ENCODE measurements at regions of chr9 and their contacts with region 1.

Region 1: GRCh38 chr9:68584189-68585033 is 43.7 kb upstream of the TMEM252 start:
- DNase-seq: peak; percentile 80
- ATAC-seq: peak; percentile 99
- H3K4me3 ChIP-seq: no peak overlapping the region
- H3K27ac ChIP-seq: no peak overlapping the region
- H3K4me1 ChIP-seq: no peaks in the 10 kb centered on the region
- H3K27me3 ChIP-seq: peaks cover 3% of the 10 kb centered on the region; the same call in 1 of the 2 replicates
- CTCF ChIP-seq: peak; percentile 99
- POLR2A ChIP-seq: no peak
- RAD21 ChIP-seq: peak; percentile 92

Region 2: DNA sequence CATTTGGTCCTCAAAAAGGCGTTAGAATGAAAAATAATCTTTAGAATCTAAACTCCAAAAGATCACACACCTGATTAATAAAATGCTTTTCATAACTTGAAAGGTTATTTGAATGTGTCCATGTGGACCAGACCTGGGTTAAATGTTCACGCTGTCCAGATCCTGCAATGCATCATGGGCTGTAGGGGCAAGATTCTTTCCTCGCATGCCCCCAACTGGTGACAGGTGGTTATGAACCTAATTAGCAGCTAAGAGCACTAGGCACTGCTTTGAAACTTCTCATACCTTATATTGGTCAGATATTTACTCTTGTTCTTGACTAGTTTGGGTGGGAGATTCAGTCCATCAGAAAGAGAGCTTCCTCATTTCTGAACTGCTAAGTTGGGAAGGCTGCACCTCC is 101.4 kb after region 1 on chr9:
- CTCF ChIA-PET with region 1: no interaction called
- POLR2A ChIA-PET with region 1: no interaction called
- RAD21 ChIA-PET with region 1: no interaction called
- intact Hi-C with region 1: loop called (anchors 5 kb)
- DNase-seq: peak; percentile 37
- ATAC-seq: peak; percentile 99
- H3K4me3 ChIP-seq: no peak overlapping the region
- H3K27ac ChIP-seq: no peak overlapping the region
- H3K4me1 ChIP-seq: peaks cover 5% of the 10 kb centered on the region in 2 experiments; a peak in 2 of 4 replicates
- H3K27me3 ChIP-seq: peaks cover 43% of the 10 kb centered on the region
- CTCF ChIP-seq: peak; percentile 53 to 69 (median 64); a peak in 5 of 6 replicates
- POLR2A ChIP-seq: no peak
- RAD21 ChIP-seq: peak; percentile 42

Region 3: GRCh38 chr9:68844631-68845612 is 260.5 kb after region 1 on chr9:
- CTCF ChIA-PET with region 1: interaction called, 6 read pairs
- POLR2A ChIA-PET with region 1: no interaction called
- RAD21 ChIA-PET with region 1: interaction called in 1 of 2 experiments, 3 read pairs
- intact Hi-C with region 1: loop called (anchors 1 kb)
- DNase-seq: peak; percentile 16
- ATAC-seq: peak; percentile 81
- H3K4me3 ChIP-seq: no peak overlapping the region
- H3K27ac ChIP-seq: no peak overlapping the region
- H3K4me1 ChIP-seq: no peaks in the 10 kb centered on the region
- H3K27me3 ChIP-seq: peaks cover 3% of the 10 kb centered on the region
- CTCF ChIP-seq: peak; percentile 34 to 74 (median 73); a peak in 5 of 6 replicates
- POLR2A ChIP-seq: no peak
- RAD21 ChIP-seq: peak; percentile 42; the same call in 1 of the 2 replicates

Region 4: DNA sequence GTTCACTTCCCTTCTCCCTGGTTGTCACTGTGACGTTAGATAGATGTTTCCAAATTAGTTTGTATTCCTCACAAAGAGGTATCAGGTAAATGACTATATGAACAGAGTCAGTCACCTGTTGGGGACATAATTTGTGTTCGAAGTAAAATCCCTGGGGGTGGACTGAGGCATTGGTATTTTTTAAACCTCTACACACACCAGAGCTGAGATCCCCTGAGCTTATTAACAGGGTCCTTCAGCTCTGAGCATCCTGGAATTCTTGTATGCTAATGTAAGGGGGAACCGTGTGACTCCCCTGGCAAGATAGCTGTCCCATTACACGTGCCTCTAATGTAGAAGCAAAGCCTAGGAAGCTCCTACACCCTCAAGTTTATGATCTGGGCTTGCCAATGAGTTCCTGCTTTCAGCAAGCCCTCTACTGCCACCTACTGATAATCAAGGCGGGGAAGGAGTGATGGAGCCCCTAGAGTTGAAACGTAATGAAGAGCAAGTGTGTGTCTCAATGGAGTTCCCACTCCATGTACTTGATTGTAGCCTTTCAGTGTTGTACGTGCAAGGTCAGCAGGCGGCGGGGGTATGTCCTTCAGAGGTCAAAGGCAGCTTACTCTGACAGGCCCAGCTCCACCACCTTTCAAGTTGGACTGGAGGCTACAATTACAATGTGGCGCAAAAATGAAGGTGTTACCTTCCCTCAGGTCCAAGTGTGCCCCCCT is 415.1 kb after region 1 on chr9:
- CTCF ChIA-PET with region 1: interaction called, 14 read pairs
- POLR2A ChIA-PET with region 1: no interaction called
- RAD21 ChIA-PET with region 1: no interaction called
- intact Hi-C with region 1: loop called (anchors 1 kb)
- DNase-seq: peak; percentile 61
- ATAC-seq: peak; percentile 97
- H3K4me3 ChIP-seq: no peak overlapping the region
- H3K27ac ChIP-seq: no peak overlapping the region
- H3K4me1 ChIP-seq: no peaks in the 10 kb centered on the region
- H3K27me3 ChIP-seq: peaks cover 7% of the 10 kb centered on the region; the same call in 1 of the 2 replicates
- CTCF ChIP-seq: peak; percentile 81 to 94 (median 86)
- POLR2A ChIP-seq: no peak
- RAD21 ChIP-seq: peak; percentile 84

Region 5: GRCh38 chr9:69027355-69028096 is 443.1 kb after region 1 on chr9:
- CTCF ChIA-PET with region 1: no interaction called
- POLR2A ChIA-PET with region 1: no interaction called
- RAD21 ChIA-PET with region 1: no interaction called
- intact Hi-C with region 1: loop called (anchors 1 kb)
- DNase-seq: peak; percentile 65
- ATAC-seq: peak; percentile 93
- H3K4me3 ChIP-seq: no peak overlapping the region
- H3K27ac ChIP-seq: no peak overlapping the region
- H3K4me1 ChIP-seq: peaks cover 0 to 4% of the 10 kb centered on the region in 2 experiments; a peak in 1 of 4 replicates
- H3K27me3 ChIP-seq: no peaks in the 10 kb centered on the region
- CTCF ChIP-seq: peak; percentile 49 to 85 (median 85); a peak in 5 of 6 replicates
- POLR2A ChIP-seq: no peak
- RAD21 ChIP-seq: peak; percentile 55

Region 6: GRCh38 chr9:69180670-69181069 is 596.3 kb after region 1 on chr9:
- CTCF ChIA-PET with region 1: no interaction called
- POLR2A ChIA-PET with region 1: no interaction called
- RAD21 ChIA-PET with region 1: no interaction called
- intact Hi-C with region 1: no loop called
- DNase-seq: peak; percentile 83
- ATAC-seq: peak; percentile 90
- H3K4me3 ChIP-seq: peak overlapping the region in 1 of 2 experiments; percentile 22; a peak in 2 of 4 replicates
- H3K27ac ChIP-seq: peak overlapping the region; percentile 57
- H3K4me1 ChIP-seq: peaks cover 45 to 53% of the 10 kb centered on the region in 2 experiments
- H3K27me3 ChIP-seq: no peaks in the 10 kb centered on the region
- CTCF ChIP-seq: no peak
- POLR2A ChIP-seq: no peak
- RAD21 ChIP-seq: no peak